Thyroid gland (tissue), 4 donors: ENCODE measurements at regions of chr14 and their contacts with region 1.

Region 1: GRCh38 chr14:54175298-54175942 is 218.8 kb upstream of the BMP4 start:
- DNase-seq: peak; percentile 70 to 74
- H3K4me3 ChIP-seq: no peak overlapping the region
- H3K27ac ChIP-seq: no peak overlapping the region
- H3K4me1 ChIP-seq: peaks cover 0 to 31% of the 10 kb centered on the region in 2 donors
- H3K27me3 ChIP-seq: no peaks in the 10 kb centered on the region
- CTCF ChIP-seq: peak; percentile 72 to 93 (median 83)
- POLR2A ChIP-seq: no peak

Region 2: DNA sequence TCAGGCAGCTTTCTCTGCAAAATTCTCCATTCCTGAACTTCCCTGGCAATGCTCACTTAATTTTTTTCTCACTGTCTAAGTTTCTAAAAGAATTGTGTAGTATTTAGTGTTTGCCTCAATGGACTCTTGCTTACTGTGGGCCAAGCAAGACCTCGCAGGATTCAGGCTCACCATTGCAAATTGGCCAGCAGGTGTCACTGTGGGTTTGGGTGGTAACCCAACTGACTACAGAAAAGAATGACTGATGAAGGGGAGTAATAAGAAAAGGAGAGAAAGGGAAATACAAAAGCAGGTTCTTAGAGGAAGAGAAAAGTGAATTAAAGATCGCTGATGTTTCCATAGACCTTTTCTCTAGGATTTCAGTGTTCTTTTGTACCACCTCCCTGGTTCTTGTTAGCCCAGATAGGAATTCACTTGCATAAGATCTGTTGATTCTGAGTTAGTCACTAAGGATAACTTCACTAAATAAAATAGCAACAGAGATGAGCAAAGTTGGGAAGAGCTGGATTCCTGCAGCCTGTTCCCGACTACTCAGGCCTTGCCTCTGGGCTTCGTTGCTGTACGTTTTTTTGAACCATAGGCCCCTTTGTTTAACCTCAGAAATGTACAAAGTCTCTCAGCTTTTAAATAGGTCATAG is 635.8 kb before region 1 on chr14:
- intact Hi-C with region 1: loop called (anchors 10 kb)
- DNase-seq: peak; percentile 75 to 87
- H3K4me3 ChIP-seq: no peak overlapping the region
- H3K27ac ChIP-seq: no peak overlapping the region
- H3K4me1 ChIP-seq: peaks cover 9 to 16% of the 10 kb centered on the region in 2 donors
- H3K27me3 ChIP-seq: no peaks in the 10 kb centered on the region
- CTCF ChIP-seq: peak; percentile 66 to 87 (median 81)
- POLR2A ChIP-seq: no peak

Region 3: DNA sequence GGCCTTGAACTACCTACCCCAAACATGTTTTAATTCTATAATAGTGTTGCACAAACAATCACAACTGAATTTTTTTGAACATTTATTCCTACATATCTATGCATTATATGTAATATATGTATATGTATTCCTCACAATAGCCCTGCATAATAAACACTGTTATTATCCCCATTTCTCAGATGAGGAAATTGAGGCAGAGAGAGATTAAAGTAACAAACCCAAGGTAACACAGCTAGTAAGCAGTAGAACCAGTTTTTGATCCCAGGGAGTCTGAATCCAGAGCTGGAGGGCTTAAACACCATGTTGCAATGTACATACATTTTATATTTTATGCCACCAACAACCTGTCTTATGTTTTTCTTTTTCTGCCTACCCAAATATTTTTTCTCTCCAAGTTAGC is 192.3 kb before region 1 on chr14:
- intact Hi-C with region 1: no loop called
- DNase-seq: no peak
- H3K4me3 ChIP-seq: no peak overlapping the region
- H3K27ac ChIP-seq: no peak overlapping the region
- H3K4me1 ChIP-seq: no peaks in the 10 kb centered on the region
- H3K27me3 ChIP-seq: no peaks in the 10 kb centered on the region
- CTCF ChIP-seq: no peak
- POLR2A ChIP-seq: no peak

Region 4: DNA sequence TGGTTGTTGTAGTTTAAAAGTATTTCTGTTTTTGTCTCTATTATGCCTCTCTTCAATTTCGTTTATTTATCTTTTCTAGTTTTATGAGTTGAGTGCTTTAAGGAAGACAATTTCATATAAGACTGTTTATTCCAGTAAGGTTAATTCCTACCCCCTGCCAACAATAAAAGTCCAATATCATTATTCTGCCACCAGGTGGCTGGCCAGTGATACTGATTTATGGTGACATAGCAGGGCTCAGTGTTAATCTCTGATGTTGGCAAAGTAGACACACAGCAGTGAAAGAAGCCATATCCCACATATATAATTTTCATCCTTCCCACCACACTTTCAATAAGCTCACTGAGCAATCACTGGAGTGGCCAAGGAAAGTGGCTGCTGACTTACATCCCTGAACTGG is 149.8 kb before region 1 on chr14:
- intact Hi-C with region 1: loop called (anchors 10 kb)
- DNase-seq: peak; percentile 8 to 28
- H3K4me3 ChIP-seq: no peak overlapping the region
- H3K27ac ChIP-seq: no peak overlapping the region
- H3K4me1 ChIP-seq: no peaks in the 10 kb centered on the region
- H3K27me3 ChIP-seq: no peaks in the 10 kb centered on the region
- CTCF ChIP-seq: peak in 4 of 6 experiments; percentile 37 to 52 (median 48)
- POLR2A ChIP-seq: no peak

Region 5: GRCh38 chr14:54085232-54085761 is 90.1 kb before region 1 on chr14:
- intact Hi-C with region 1: no loop called
- DNase-seq: no peak
- H3K4me3 ChIP-seq: no peak overlapping the region
- H3K27ac ChIP-seq: no peak overlapping the region
- H3K4me1 ChIP-seq: peaks cover 0 to 9% of the 10 kb centered on the region in 2 donors
- H3K27me3 ChIP-seq: no peaks in the 10 kb centered on the region
- CTCF ChIP-seq: no peak
- POLR2A ChIP-seq: no peak

Region 6: DNA sequence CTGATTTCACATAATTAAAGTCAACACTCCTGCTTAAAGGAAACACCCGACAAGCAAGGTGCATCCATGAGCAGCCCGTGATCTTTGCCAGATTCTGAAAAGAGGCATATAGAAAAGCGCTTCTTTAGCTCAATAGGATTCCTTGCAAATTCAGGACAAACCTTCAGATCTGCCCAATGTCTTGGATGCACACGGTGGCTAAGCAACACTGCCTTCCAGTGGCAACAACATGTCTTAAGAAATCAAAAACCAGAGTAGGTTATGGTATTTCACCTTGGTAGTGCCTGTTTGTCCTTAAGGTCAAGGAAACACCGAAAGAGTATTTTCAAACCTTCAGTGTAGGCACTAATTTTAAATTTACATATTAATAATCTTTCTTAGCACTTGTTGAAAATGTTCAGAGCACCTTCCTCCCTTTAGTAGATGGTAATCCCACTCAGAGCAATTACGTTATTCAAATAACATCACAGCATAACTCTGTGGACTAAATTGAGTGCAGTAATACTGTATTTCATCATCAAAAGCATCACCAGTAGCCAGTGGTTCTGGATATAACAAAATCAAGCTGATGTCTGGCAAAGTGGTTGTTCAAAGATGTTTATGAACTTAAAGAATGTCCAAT is 163.4 kb after region 1 on chr14:
- intact Hi-C with region 1: loop called (anchors 10 kb)
- DNase-seq: peak; percentile 30 to 50
- H3K4me3 ChIP-seq: no peak overlapping the region
- H3K27ac ChIP-seq: no peak overlapping the region
- H3K4me1 ChIP-seq: no peaks in the 10 kb centered on the region
- H3K27me3 ChIP-seq: no peaks in the 10 kb centered on the region
- CTCF ChIP-seq: peak in 5 of 6 experiments; percentile 15 to 62 (median 53)
- POLR2A ChIP-seq: no peak